HepG2 (cell line): ENCODE measurements at regions of chr1 and their contacts with region 1.

Region 1: GRCh38 chr1:208007938-208008342 is 97.0 kb upstream of the CD34 start:
- DNase-seq: no peak
- ATAC-seq: no peak
- H3K4me3 ChIP-seq: no peak overlapping the region
- H3K27ac ChIP-seq: no peak overlapping the region
- H3K4me1 ChIP-seq: no peaks in the 10 kb centered on the region
- H3K27me3 ChIP-seq: peaks cover 0 to 6% of the 10 kb centered on the region in 2 experiments; a peak in 2 of 5 replicates
- CTCF ChIP-seq: no peak
- EP300 ChIP-seq: no peak
- POLR2A ChIP-seq: no peak
- RAD21 ChIP-seq: no peak

Region 2: DNA sequence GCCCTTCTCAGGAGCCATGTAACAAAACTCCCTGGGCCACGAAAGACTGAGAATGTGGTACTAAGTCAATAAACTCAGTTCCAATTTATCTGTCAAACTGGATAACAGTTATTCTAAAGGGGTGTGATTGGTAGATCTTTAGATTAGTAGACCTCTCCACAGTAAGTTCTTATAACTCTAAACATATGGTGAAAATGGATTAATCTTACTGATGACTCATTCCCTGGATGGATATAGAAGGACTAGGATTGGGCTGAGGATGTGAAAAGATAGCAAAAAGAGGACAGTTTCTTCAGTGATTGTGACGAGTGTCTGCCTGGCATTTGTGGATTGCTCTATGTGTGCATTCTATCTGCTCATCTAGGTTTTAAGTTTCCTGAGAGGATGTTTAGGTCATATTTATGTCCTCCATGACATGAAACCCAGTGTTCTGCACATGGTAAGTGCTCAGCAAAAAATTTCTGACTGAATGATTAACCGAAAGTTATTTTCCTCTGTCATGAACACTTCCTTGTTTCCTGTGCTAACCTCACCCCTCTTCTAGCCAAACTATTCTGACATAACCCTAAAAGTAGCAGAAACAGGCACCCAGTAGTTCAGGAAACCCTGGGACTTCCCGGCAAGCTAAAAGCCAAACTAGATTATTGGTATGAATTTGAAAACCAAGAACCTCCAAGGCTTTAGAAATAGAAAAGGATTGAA is 633.8 kb after region 1 on chr1:
- CTCF ChIA-PET with region 1: no interaction called
- POLR2A ChIA-PET with region 1: no interaction called
- in situ Hi-C with region 1: loop called (anchors 25 kb)
- intact Hi-C with region 1: no loop called
- DNase-seq: no peak
- ATAC-seq: no peak
- H3K4me3 ChIP-seq: no peak overlapping the region
- H3K27ac ChIP-seq: no peak overlapping the region
- H3K4me1 ChIP-seq: no peaks in the 10 kb centered on the region
- H3K27me3 ChIP-seq: no peaks in the 10 kb centered on the region
- CTCF ChIP-seq: no peak
- EP300 ChIP-seq: no peak
- POLR2A ChIP-seq: no peak
- RAD21 ChIP-seq: no peak